ENCODE measurements at regions of chr1 and their contacts with region 1.

Region 1: GRCh38 chr1:8145545-8146202 is 119.6 kb upstream of the ERRFI1 start:
- DNase-seq: no peak
- H3K4me3 ChIP-seq: no peak overlapping the region
- H3K4me3 Mint-ChIP-seq: no peak overlapping the region
- H3K27ac Mint-ChIP-seq: no peak overlapping the region
- H3K4me1 ChIP-seq: no peaks in the 10 kb centered on the region
- H3K4me1 Mint-ChIP-seq: peaks cover 6% of the 10 kb centered on the region
- H3K27me3 ChIP-seq: no peaks in the 10 kb centered on the region
- H3K27me3 Mint-ChIP-seq: no peaks in the 10 kb centered on the region
- CTCF ChIP-seq: no peak

Region 2: GRCh38 chr1:7962636-7963377 is 182.9 kb before region 1 on chr1:
- CTCF ChIA-PET with region 1: no interaction called
- POLR2A ChIA-PET with region 1: interaction called, 10 read pairs
- intact Hi-C with region 1: no loop called
- DNase-seq: no peak
- H3K4me3 ChIP-seq: peak overlapping the region; percentile 72
- H3K4me3 Mint-ChIP-seq: peak overlapping the region; percentile 99
- H3K27ac Mint-ChIP-seq: no peak overlapping the region
- H3K4me1 ChIP-seq: no peaks in the 10 kb centered on the region
- H3K4me1 Mint-ChIP-seq: peaks cover 6% of the 10 kb centered on the region
- H3K27me3 ChIP-seq: no peaks in the 10 kb centered on the region
- H3K27me3 Mint-ChIP-seq: no peaks in the 10 kb centered on the region
- CTCF ChIP-seq: no peak

Region 3: GRCh38 chr1:8097077-8097799 is 48.4 kb before region 1 on chr1:
- CTCF ChIA-PET with region 1: no interaction called
- POLR2A ChIA-PET with region 1: no interaction called
- intact Hi-C with region 1: no loop called
- DNase-seq: peak in 1 of 2 experiments; percentile 16
- H3K4me3 ChIP-seq: no peak overlapping the region
- H3K4me3 Mint-ChIP-seq: peak overlapping the region; percentile 34
- H3K27ac Mint-ChIP-seq: peak overlapping the region; percentile 86
- H3K4me1 ChIP-seq: peaks cover 46% of the 10 kb centered on the region
- H3K4me1 Mint-ChIP-seq: peaks cover 38% of the 10 kb centered on the region
- H3K27me3 ChIP-seq: no peaks in the 10 kb centered on the region
- H3K27me3 Mint-ChIP-seq: no peaks in the 10 kb centered on the region
- CTCF ChIP-seq: no peak

Region 4: DNA sequence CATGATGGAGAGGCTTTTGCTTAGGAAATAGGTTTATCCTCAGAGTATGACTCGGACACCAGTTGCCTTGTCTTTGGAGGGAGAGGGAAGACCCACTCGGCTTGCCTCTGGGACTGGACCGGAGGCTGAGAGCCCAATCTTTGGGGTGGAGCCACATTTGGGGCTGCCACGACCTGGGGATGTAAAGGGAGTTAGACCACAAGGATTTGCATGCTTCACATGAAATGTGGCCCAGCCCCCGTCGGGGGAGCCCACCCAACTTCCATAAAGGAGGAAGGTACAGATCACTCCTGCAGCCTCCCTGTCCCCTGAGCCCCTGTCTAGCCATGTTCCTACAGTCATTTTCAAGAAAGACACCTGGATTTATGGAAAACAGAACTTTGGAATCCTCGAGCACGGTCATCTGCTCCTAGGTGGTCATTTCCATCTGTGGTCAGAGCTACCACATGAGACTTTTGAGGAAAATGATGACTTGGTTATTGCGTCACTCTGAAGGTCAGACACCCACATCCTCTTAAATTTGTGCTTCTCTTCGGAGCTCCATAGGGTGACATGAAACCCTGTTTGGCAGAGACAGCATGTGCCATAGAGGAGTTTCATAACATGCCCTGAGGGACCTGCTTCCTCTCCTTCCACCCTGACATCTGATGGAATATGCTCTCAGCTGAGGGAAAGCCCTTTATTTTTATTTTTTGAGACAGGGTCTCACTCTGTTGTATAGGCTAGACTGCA is 72.9 kb after region 1 on chr1:
- CTCF ChIA-PET with region 1: no interaction called
- POLR2A ChIA-PET with region 1: no interaction called
- intact Hi-C with region 1: no loop called
- DNase-seq: no peak
- H3K4me3 ChIP-seq: no peak overlapping the region
- H3K4me3 Mint-ChIP-seq: no peak overlapping the region
- H3K27ac Mint-ChIP-seq: no peak overlapping the region
- H3K4me1 ChIP-seq: 0 out of 2 replicates have a peak, but pooled peaks cover 5% of the 10 kb centered on the region
- H3K4me1 Mint-ChIP-seq: peaks cover 10% of the 10 kb centered on the region
- H3K27me3 ChIP-seq: no peaks in the 10 kb centered on the region
- H3K27me3 Mint-ChIP-seq: no peaks in the 10 kb centered on the region
- CTCF ChIP-seq: no peak

Region 5: GRCh38 chr1:8746554-8746953 is 600.9 kb after region 1 on chr1:
- CTCF ChIA-PET with region 1: no interaction called
- POLR2A ChIA-PET with region 1: no interaction called
- intact Hi-C with region 1: no loop called
- DNase-seq: no peak
- H3K4me3 ChIP-seq: no peak overlapping the region
- H3K4me3 Mint-ChIP-seq: no peak overlapping the region
- H3K27ac Mint-ChIP-seq: peak overlapping the region; percentile 88
- H3K4me1 ChIP-seq: peaks cover 41% of the 10 kb centered on the region
- H3K4me1 Mint-ChIP-seq: peaks cover 30% of the 10 kb centered on the region
- H3K27me3 ChIP-seq: no peaks in the 10 kb centered on the region
- H3K27me3 Mint-ChIP-seq: no peaks in the 10 kb centered on the region
- CTCF ChIP-seq: no peak